CD14-positive monocyte (primary cell): ENCODE measurements at regions of chrX and their contacts with region 1.

Region 1: GRCh38 chrX:115642895-115643530 is 82.0 kb downstream of the PLS3 start:
- DNase-seq: peak; percentile 37 to 55 (median 48)
- H3K4me3 ChIP-seq: no peak overlapping the region
- H3K4me3 Mint-ChIP-seq: no peak overlapping the region
- H3K27ac ChIP-seq: no peak overlapping the region
- H3K27ac Mint-ChIP-seq: no peak overlapping the region
- H3K4me1 ChIP-seq: peaks cover 0 to 6% of the 10 kb centered on the region in 2 donors
- H3K4me1 Mint-ChIP-seq: peaks cover 10% of the 10 kb centered on the region
- H3K27me3 ChIP-seq: peaks cover 0 to 2% of the 10 kb centered on the region in 2 donors
- H3K27me3 Mint-ChIP-seq: peaks cover 0 to 12% (median 0%) of the 10 kb centered on the region in 3 donors
- CTCF ChIP-seq: peak; percentile 81

Region 2: DNA sequence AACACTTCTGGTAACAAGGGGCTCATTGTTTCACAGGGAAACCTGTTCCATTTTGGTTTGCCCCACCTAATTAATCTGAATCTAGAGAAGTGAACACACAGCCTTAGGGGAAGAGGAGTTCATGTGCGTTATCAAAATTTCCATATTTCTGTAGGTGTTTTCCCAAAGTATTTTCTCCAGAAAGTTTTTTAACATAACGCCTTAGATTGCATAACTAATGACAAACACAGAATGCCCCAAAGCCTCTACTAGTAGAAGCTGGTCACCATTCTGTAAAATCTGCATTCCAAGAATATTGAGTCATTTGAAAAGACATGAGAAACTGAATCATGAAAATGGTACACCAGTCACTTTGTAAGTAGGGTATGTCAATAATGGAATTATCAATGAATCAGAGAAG is 666.7 kb before region 1 on chrX:
- intact Hi-C with region 1: no loop called
- DNase-seq: no peak
- H3K4me3 ChIP-seq: no peak overlapping the region
- H3K4me3 Mint-ChIP-seq: no peak overlapping the region
- H3K27ac ChIP-seq: no peak overlapping the region
- H3K27ac Mint-ChIP-seq: no peak overlapping the region
- H3K4me1 ChIP-seq: no peaks in the 10 kb centered on the region
- H3K4me1 Mint-ChIP-seq: no peaks in the 10 kb centered on the region
- H3K27me3 ChIP-seq: no peaks in the 10 kb centered on the region
- H3K27me3 Mint-ChIP-seq: peaks cover 0 to 1% (median 0%) of the 10 kb centered on the region in 3 donors
- CTCF ChIP-seq: no peak

Region 3: DNA sequence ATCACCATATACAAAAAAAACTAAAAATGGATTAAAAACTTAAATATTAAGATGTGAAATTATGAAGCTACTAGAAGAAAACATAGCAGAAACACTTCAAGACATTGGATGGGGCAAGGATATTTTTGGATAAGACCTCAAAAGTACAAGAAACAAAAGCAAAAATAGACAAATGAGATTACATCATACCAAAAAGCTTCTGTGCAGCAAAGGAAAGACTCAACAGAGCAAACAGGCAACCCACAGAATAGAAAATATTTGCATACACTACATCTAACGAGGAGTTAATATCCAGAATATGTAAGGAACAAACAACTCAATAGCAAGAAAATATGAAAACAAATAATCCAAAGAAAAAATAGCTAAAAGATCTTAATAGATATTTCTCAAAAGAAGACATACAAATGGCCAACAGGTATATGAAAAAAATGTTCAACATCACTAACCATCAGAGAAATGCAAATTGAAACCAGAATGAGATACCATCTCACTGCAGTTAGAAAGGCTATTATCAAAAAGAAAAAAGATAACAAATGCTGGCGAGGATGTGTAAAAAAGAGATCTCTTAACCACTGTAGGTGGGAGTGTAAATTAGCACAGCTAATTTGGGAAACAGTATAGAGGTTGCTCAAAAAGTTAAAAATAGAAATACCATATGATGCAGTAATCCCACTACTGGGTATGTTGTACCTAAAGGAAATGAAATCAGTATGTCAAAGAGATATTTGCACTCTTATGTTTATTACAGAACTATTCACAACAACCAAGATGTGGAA is 391.4 kb before region 1 on chrX:
- intact Hi-C with region 1: no loop called
- DNase-seq: no peak
- H3K4me3 ChIP-seq: no peak overlapping the region
- H3K4me3 Mint-ChIP-seq: no peak overlapping the region
- H3K27ac ChIP-seq: no peak overlapping the region
- H3K27ac Mint-ChIP-seq: no peak overlapping the region
- H3K4me1 ChIP-seq: no peaks in the 10 kb centered on the region
- H3K4me1 Mint-ChIP-seq: no peaks in the 10 kb centered on the region
- H3K27me3 ChIP-seq: no peaks in the 10 kb centered on the region
- H3K27me3 Mint-ChIP-seq: peaks cover 0 to 8% (median 0%) of the 10 kb centered on the region in 3 donors
- CTCF ChIP-seq: no peak

Region 4: DNA sequence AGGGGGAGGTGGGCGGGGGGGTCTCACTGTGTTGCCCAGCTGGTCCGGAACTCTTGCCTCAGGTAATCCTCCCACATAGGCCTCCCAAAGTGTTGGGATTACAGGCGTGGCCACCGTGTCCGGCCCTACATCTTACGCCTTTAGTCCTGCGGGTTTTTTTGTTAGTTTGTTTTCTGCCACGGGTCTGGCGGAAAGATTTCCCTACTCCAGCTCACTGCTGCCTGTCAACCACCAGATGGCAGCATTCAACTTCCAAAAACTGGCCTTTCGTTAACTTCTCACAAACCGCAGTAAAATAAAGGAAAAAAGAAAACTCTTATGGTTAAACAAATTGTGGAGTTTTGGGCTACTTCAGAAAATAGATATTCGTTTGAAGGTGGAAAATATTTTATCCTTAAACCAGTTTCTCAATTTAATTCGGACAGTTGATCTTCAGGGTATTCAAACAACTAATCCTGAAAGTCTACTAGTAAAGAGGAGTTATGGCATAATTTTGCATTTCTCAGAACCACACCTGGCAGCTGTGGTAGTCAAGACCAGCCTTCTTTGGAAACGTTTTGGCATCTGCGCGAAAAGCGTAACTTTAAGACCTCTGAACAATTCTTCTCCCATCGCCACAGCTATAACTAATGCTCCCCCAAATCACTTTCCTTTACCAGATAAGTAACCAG is 312.4 kb before region 1 on chrX:
- intact Hi-C with region 1: loop called (anchors 2 to 5 kb)
- DNase-seq: peak; percentile 15 to 41 (median 20)
- H3K4me3 ChIP-seq: no peak overlapping the region
- H3K4me3 Mint-ChIP-seq: no peak overlapping the region
- H3K27ac ChIP-seq: no peak overlapping the region
- H3K27ac Mint-ChIP-seq: no peak overlapping the region
- H3K4me1 ChIP-seq: no peaks in the 10 kb centered on the region
- H3K4me1 Mint-ChIP-seq: no peaks in the 10 kb centered on the region
- H3K27me3 ChIP-seq: peaks cover 0 to 4% of the 10 kb centered on the region in 2 donors
- H3K27me3 Mint-ChIP-seq: peaks cover 0 to 19% (median 2%) of the 10 kb centered on the region in 3 donors
- CTCF ChIP-seq: peak; percentile 55

Region 5: DNA sequence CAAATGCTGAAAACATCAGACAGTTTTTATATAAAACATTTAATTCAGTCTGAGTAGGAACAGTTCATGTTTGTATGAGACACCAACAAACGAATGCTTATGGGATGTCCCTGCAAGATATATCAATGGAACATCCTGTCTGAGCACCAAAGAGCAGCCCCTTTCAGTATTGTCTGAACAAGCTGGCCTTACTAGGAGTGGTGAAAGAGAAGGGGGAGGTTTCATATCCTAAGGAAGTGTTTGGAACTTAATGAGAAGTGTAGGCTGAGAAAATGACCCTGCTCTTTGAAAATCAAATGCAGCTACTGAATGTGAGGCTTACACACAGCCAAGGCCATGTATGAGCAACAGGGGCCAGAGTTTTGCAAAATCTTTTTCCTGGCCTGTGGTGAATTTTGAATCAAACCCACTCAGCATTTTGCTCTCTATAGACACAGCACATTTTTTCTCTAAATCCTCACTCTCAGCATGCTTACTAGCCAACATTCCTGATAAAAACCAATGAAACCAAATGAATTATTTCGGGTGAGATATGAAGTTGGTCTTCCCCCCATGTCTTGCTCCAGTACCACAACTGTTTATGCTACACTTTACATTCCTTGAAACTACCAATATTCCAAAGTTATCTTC is 234.1 kb before region 1 on chrX:
- intact Hi-C with region 1: no loop called
- DNase-seq: no peak
- H3K4me3 ChIP-seq: no peak overlapping the region
- H3K4me3 Mint-ChIP-seq: no peak overlapping the region
- H3K27ac ChIP-seq: no peak overlapping the region
- H3K27ac Mint-ChIP-seq: no peak overlapping the region
- H3K4me1 ChIP-seq: no peaks in the 10 kb centered on the region
- H3K4me1 Mint-ChIP-seq: no peaks in the 10 kb centered on the region
- H3K27me3 ChIP-seq: peaks cover 0 to 3% of the 10 kb centered on the region in 2 donors
- H3K27me3 Mint-ChIP-seq: peaks cover 0 to 4% (median under 1%) of the 10 kb centered on the region in 3 donors
- CTCF ChIP-seq: no peak

Region 6: GRCh38 chrX:115487608-115488007 is 155.4 kb before region 1 on chrX:
- intact Hi-C with region 1: no loop called
- DNase-seq: no peak
- H3K4me3 ChIP-seq: no peak overlapping the region
- H3K4me3 Mint-ChIP-seq: no peak overlapping the region
- H3K27ac ChIP-seq: no peak overlapping the region
- H3K27ac Mint-ChIP-seq: no peak overlapping the region
- H3K4me1 ChIP-seq: peaks cover 0 to 5% of the 10 kb centered on the region in 2 donors
- H3K4me1 Mint-ChIP-seq: peaks cover 12% of the 10 kb centered on the region
- H3K27me3 ChIP-seq: peaks cover 0 to 4% of the 10 kb centered on the region in 2 donors
- H3K27me3 Mint-ChIP-seq: peaks cover 0 to 5% (median 0%) of the 10 kb centered on the region in 3 donors
- CTCF ChIP-seq: no peak